A549 (cell line): ENCODE measurements at regions of chr3 and their contacts with region 1.

Region 1: DNA sequence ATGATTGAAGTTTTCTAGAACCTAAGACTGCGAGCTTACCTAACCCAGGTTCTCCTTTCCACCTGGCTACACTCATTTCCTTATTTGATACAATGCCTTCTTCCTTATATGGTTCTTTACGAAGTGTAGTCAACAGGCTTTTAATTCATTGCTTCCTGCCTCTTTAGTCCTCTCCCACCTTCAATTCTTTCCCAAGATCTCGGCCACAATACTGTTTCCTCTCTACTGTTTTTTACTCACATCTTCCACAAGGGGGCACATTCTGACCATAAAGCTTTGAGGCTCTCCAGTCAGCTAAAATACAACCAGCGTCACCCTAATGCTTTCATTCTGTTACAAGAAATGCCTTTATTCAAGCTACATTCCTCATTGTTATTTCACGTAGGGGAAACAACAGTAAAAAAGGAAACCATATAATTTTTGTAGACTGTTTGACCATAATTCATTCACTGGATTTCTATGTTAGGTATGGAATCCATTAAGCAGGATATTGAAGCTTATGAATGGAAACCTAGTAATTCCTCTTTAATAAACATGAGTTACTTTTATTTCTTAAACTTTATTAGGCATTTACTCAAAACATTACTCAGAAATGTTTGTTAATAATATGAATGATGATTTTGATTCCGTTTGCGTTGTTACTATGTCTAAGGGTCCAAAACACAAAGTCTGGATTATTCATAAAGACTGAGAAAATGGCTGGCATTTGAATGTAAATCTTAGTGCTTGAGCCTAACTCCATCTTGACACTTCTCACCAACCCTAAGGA is 29.5 kb upstream of the VEPH1 start:
- DNase-seq: peak; percentile 58 to 64
- ATAC-seq: peak; percentile 90 to 97
- H3K4me3 ChIP-seq: no peak overlapping the region
- H3K27ac ChIP-seq: no peak overlapping the region
- H3K4me1 ChIP-seq: no peaks in the 10 kb centered on the region
- CTCF ChIP-seq: peak; percentile 83
- EP300 ChIP-seq: no peak
- POLR2A ChIP-seq: no peak
- RAD21 ChIP-seq: peak; percentile 82 to 88

Region 2: GRCh38 chr3:156826144-156826895 is 706.4 kb before region 1 on chr3 and contains the start of gene LEKR1:
- CTCF ChIA-PET with region 1: no interaction called
- POLR2A ChIA-PET with region 1: no interaction called
- DNase-seq: peak; percentile 73 to 96
- ATAC-seq: peak; percentile 91 to 95
- H3K4me3 ChIP-seq: peak within 1 kb of the TSS; percentile 54
- H3K27ac ChIP-seq: peak within 1 kb of the TSS; percentile 89 to 94
- H3K4me1 ChIP-seq: peaks cover 11% of the 10 kb centered on the region
- CTCF ChIP-seq: no peak
- EP300 ChIP-seq: no peak
- POLR2A ChIP-seq: peak; percentile 62
- RAD21 ChIP-seq: no peak; a peak in 2 of 5 replicates
- polyA plus RNA-seq, gene LEKR1: 0.69 and 1.4 TPM in 2 replicates

Region 3: DNA sequence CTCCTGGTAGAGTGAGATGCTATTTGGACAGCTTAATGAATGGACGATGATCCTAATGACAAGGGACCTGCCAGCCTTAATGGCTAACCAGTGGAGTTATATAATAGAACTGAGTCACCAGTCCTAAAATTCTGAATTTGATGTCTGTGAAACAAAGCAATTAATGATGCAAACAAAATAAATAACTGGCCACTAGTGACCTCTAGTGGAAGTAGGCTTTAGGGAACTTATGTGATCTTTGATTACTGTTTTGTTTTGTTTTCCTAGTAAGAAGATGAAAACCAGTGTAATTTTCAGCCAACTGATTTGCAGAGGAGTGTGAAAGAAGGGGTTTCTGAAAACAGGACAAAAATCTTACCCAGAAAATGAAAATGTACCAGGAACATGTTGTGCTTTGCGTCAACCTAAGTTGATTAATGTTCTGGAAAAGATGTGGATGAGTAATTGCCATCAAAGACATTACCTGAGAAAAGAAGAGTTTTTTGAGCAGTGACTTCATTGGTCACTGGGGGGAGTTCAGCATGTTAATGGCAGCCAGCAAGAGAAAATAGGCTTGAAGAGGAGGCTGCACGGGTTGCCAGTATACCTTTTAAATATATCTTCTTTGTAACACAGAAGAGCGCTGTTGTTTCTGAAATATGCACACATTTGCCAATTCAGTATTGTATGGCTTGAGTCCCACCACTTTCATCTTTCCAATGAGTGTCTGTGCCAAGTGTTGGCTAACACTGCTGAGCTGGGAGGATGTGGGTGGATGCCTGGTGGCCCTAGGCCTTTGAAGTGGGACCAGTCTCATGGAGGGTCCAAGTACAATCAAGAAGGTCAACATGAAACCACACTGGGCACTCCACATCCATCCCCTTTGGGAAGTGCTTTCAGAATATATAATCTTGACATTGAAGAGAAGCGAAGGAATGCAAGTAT is 38.8 kb before region 1 on chr3:
- CTCF ChIA-PET with region 1: interaction called, 13 read pairs
- POLR2A ChIA-PET with region 1: no interaction called
- DNase-seq: peak; percentile 10 to 47
- ATAC-seq: peak; percentile 39 to 64; a peak in 3 of 6 replicates
- H3K4me3 ChIP-seq: no peak overlapping the region
- H3K27ac ChIP-seq: no peak overlapping the region
- H3K4me1 ChIP-seq: no peaks in the 10 kb centered on the region
- CTCF ChIP-seq: peak; percentile 82
- EP300 ChIP-seq: no peak
- POLR2A ChIP-seq: no peak
- RAD21 ChIP-seq: peak; percentile 71 to 80

Region 4: DNA sequence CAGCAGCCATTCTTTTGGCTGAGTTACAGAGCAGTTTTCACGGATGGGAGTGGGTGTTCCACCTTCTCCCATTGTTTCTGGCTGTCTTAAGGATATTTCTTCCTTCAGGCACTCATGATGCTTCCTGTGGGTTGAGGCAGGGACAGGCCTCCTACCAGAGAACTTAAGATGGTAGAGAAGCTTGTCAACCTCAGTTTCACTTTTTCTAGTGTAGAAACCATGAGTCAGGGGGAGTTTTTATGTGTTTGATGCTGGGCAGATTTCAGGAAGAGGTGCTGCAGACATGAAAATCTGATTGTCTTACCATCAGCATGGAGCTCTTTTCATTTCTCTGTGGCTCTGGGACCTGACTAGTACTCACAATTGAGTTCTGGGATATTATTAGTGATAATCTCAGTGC is 19.2 kb after region 1 on chr3:
- CTCF ChIA-PET with region 1: interaction called, 11 read pairs
- POLR2A ChIA-PET with region 1: no interaction called
- DNase-seq: no peak
- ATAC-seq: no peak
- H3K4me3 ChIP-seq: no peak overlapping the region
- H3K27ac ChIP-seq: no peak overlapping the region
- H3K4me1 ChIP-seq: no peaks in the 10 kb centered on the region
- CTCF ChIP-seq: no peak
- EP300 ChIP-seq: no peak
- POLR2A ChIP-seq: no peak
- RAD21 ChIP-seq: no peak

Region 5: DNA sequence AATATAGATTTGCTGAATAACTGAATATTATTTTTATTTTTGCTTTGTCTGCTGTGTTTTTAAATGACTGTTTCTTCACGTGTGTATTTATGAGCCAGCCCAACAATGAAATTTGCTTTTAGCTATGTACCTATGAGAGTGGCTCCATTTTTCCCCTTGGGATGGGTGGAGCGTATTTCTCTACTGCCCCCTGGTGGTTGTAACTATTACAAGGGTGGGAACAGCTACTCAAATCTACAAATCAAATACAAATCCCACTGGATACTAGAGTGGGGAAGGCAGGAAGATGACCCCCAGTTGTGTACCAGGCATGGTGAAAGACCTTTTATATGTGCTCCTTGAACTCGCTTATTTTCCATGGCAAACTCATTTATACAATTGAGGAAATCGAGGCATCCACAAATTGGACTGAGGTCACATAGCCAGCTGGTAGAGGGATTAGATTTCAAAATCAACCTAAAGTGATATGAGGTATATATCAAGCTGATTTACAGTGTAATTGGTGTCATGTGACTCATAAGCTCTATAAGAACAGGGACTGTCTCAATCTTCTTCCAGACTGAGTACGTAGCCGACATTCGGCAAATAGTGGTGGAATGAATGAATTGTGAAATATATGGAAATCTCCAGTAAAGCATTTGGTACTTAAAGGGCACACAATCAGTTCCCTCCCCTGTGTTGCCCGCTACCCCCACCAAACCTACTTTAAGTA is 40.0 kb after region 1 on chr3:
- CTCF ChIA-PET with region 1: interaction called, 60 read pairs
- POLR2A ChIA-PET with region 1: no interaction called
- DNase-seq: peak; percentile 35 to 57
- ATAC-seq: peak; percentile 73 to 91; a peak in 4 of 6 replicates
- H3K4me3 ChIP-seq: no peak overlapping the region
- H3K27ac ChIP-seq: no peak overlapping the region
- H3K4me1 ChIP-seq: 0 out of 3 replicates have a peak, but pooled peaks cover 6% of the 10 kb centered on the region
- CTCF ChIP-seq: peak; percentile 75
- EP300 ChIP-seq: no peak
- POLR2A ChIP-seq: no peak
- RAD21 ChIP-seq: peak; percentile 60 to 62

Region 6: DNA sequence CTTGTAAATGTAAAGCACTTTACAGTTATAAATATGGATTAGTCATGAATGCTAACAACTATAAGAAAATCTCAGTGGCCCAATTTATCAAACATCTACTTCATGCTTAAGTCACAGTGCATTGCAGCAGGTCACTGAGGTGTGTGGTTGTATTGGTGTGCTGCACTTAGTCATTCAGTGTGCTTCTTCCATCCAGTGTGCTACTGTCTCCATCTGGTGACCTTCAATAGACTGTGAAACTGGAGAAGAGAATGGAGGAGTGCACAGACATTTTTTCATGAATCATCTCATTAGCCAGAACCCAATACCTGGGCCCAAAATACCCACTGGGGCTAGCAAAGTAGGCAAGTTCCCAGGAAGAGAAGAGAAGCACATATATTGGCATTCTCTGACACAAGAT is 373.9 kb after region 1 on chr3:
- CTCF ChIA-PET with region 1: no interaction called
- POLR2A ChIA-PET with region 1: no interaction called
- DNase-seq: peak in 1 of 2 experiments; percentile 4
- ATAC-seq: no peak
- H3K4me3 ChIP-seq: no peak overlapping the region
- H3K27ac ChIP-seq: no peak overlapping the region
- H3K4me1 ChIP-seq: no peaks in the 10 kb centered on the region
- CTCF ChIP-seq: no peak
- EP300 ChIP-seq: no peak
- POLR2A ChIP-seq: no peak
- RAD21 ChIP-seq: peak in 1 of 2 experiments; percentile 19; a peak in 2 of 5 replicates

Region 7: GRCh38 chr3:158434412-158435038 is 901.8 kb after region 1 on chr3:
- CTCF ChIA-PET with region 1: interaction called, 14 read pairs
- POLR2A ChIA-PET with region 1: no interaction called
- DNase-seq: peak; percentile 5 to 72
- ATAC-seq: peak; percentile 94 to 99
- H3K4me3 ChIP-seq: no peak overlapping the region
- H3K27ac ChIP-seq: no peak overlapping the region
- H3K4me1 ChIP-seq: peaks cover 7% of the 10 kb centered on the region; the same call in 2 of the 3 replicates
- CTCF ChIP-seq: peak; percentile 91
- EP300 ChIP-seq: no peak
- POLR2A ChIP-seq: no peak
- RAD21 ChIP-seq: peak; percentile 89 to 90